Heart left ventricle (tissue), 16 donors: ENCODE measurements at regions of chr3 and their contacts with region 1.

Region 1: DNA sequence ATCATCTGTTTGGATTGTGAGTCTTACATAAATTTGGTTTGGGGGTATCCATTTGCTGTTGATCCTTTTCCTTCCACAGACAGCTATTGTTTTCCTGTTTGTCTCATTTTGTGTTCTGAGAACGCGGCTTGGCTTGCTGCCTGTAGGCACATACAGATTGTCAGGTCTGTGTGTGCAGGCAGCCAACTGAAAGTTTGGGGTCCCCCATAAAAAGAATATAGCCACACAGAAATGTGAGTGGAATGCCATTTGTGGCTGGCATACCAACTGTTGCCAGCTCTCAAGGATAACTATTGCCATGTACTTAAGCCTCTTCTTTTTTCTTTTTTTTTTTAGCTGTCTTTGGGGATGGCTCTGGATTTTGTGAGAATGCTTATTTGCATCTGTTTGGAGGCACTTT is 1308.0 kb downstream of the ROBO1 start:
- DNase-seq: no peak
- ATAC-seq: no peak
- H3K4me3 ChIP-seq: no peak overlapping the region
- H3K27ac ChIP-seq: no peak overlapping the region
- H3K4me1 ChIP-seq: peaks cover 0 to 3% (median 0%) of the 10 kb centered on the region in 12 donors
- H3K27me3 ChIP-seq: no peaks in the 10 kb centered on the region
- CTCF ChIP-seq: no peak
- POLR2A ChIP-seq: no peak

Region 2: DNA sequence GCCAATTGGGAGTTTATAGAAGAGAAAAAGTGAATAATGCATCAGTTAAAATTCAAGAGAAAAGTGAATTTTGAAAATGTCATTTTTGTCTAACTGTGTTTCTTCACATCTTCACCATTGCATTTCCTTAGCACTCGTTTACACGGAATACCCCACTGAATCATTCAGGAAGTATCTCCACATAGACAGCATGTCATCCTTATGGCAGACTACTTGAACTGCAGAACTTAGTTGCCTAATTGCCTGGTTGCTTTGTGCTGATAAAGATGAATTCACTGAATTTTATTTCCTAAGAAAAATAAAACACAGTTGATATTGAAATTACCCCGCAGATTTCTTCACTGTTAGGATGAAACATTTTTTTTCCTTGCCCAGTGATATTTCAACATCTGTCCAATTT is 680.9 kb after region 1 on chr3:
- intact Hi-C with region 1: loop called in 1 of 10 experiments (anchors 5 kb)
- DNase-seq: no peak
- ATAC-seq: no peak
- H3K4me3 ChIP-seq: no peak overlapping the region
- H3K27ac ChIP-seq: no peak overlapping the region
- H3K4me1 ChIP-seq: no peaks in the 10 kb centered on the region
- H3K27me3 ChIP-seq: no peaks in the 10 kb centered on the region
- CTCF ChIP-seq: no peak
- POLR2A ChIP-seq: no peak